ENCODE measurements at regions of chr14 and their contacts with region 1.

Region 1: DNA sequence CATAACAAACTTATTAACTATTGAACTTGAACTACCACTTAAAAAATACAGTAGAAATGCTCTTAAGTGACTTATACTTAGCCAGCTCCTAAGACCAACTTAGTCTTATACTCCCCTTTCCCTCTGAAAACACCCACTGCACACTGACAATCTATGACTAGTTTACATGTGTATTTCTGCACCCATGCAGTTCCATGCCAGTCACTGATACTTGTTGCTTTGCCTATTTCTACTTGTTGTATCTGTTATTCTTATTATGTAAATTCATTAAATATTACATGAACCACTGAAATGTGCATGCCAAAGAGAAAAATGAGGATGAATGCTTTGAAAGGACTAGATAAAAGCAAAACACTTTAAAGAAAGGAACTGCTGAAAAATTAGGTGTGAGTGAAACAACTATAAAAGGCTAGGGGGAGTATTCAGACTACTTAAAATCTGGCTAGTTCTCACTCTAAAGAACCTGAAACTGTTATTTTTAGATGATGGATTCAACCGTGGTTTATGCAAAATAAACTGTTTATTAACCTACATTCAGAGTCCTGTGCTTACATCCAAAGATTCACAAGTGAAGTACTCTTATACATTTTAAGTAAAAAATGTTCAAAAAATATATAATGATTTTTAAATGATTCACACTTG is 74.7 kb downstream of the RPS6KA5 start:
- DNase-seq: no peak
- H3K4me3 ChIP-seq: no peak overlapping the region
- H3K27ac ChIP-seq: no peak overlapping the region
- H3K4me1 ChIP-seq: peaks cover 8% of the 10 kb centered on the region
- H3K27me3 ChIP-seq: no peaks in the 10 kb centered on the region
- CTCF ChIP-seq: no peak

Region 2: DNA sequence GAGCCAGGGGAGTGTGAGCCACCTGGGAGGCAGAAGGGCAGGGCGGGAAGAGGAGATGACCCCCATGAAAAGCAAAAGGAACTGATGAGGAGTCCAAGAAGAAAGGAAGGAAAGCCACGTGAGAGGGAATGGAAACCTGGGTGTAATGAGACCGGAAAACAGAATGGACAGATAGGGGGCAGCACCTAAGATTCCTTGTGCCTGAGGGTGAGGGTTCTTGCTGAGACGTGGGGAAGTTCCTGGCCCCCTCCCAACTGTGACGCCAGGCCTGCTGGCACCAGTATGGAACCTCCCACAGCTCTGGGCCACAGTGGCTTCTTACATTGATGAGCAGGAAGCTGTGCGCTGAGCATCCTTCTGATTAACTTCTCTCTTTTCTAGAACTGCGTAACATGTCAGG is 200.3 kb before region 1 on chr14:
- CTCF ChIA-PET with region 1: no interaction called
- dilution Hi-C with region 1: no loop called
- in situ Hi-C with region 1: no loop called
- intact Hi-C with region 1: no loop called
- DNase-seq: no peak
- H3K4me3 ChIP-seq: no peak overlapping the region
- H3K27ac ChIP-seq: no peak overlapping the region
- H3K4me1 ChIP-seq: peaks cover 15% of the 10 kb centered on the region
- H3K27me3 ChIP-seq: no peaks in the 10 kb centered on the region
- CTCF ChIP-seq: no peak

Region 3: DNA sequence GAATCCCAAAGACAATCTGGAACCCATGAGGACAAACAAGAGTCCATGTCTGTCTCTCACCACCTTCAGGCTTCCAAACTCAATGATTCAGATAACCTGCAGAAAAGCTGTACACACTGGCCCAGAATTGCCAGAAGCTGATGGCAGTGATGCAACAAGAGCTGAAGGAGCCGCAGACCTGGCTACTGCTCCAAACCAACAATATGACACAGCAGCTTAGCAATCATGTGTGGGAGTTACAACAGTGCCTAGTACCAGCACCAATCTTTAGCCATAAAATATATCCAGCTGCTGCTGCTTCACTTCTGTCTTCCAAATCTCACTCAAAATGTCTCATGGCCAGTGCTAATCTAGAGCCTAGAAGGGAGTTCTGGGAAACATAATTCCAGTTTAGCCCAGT is 52.7 kb after region 1 on chr14:
- CTCF ChIA-PET with region 1: no interaction called
- dilution Hi-C with region 1: no loop called
- in situ Hi-C with region 1: no loop called
- intact Hi-C with region 1: loop called (anchors 5 kb)
- DNase-seq: peak; percentile 87
- H3K4me3 ChIP-seq: no peak overlapping the region
- H3K27ac ChIP-seq: no peak overlapping the region
- H3K4me1 ChIP-seq: peaks cover 11% of the 10 kb centered on the region
- H3K27me3 ChIP-seq: no peaks in the 10 kb centered on the region
- CTCF ChIP-seq: no peak

Region 4: DNA sequence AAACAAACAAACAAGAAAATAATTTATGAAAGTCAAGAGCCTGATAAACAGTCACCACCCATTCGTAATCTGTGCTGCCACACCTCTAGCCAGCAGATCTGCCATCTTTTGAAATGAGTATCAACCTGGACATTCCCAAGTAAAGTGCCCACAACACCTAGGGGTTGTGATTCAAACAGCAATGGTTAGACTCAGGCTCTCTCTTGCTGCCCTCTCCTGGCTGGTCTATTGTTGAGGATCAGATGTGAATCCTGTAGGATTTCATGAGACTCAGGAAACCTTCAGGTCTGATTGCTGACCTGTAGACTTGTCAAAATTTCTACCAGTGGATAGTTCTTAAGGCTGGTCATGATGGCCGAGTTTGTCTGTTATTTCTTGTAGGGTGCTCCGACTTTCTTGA is 154.9 kb after region 1 on chr14:
- CTCF ChIA-PET with region 1: no interaction called
- dilution Hi-C with region 1: no loop called
- in situ Hi-C with region 1: no loop called
- intact Hi-C with region 1: loop called (anchors 10 kb)
- DNase-seq: peak; percentile 59
- H3K4me3 ChIP-seq: no peak overlapping the region
- H3K27ac ChIP-seq: no peak overlapping the region
- H3K4me1 ChIP-seq: peaks cover 7% of the 10 kb centered on the region
- H3K27me3 ChIP-seq: no peaks in the 10 kb centered on the region
- CTCF ChIP-seq: peak; percentile 71 to 81

Measured in mammary epithelial cell (primary cell).